CD8-positive, alpha-beta memory T cell (primary cell): ENCODE measurements at regions of chr16 and their contacts with region 1.

Region 1: DNA sequence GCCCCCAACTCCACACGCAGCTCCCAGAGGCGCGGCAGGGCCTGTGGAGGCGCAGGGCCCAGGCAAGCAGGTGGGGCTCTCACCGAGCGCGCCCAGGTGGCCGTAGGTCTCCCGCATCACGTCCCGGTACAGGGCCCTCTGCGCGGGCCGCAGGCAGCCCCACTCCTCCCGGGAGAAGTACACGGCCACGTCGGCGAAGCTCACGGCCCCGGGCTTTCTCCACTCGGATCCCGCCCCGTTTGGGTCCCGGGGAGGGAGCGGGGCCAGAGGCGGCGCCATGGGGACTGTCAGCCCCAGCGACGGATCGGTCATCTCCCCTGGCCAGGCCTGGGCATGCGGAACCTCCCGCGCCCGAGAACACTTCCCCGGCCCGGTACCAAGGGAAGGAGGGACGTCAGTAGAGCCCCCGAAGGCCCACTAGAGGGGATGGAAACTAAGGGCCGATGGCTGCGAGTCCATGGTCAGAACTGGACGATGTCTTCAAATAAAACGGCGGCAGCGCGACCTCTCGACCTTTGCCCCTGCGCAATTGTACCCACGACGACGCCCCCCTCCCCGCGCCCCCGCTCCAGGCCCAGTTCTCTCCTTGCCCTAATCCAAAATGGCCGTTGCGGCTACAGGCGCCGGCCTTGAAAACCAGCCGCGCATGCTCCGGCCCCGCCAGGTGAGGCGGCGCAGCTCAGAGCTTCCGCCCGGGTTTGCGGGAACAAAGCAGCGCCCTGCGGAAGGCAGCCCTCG is at the start of gene ZNF747:
- DNase-seq: peak; percentile 86 to 94 (median 87)
- H3K4me3 ChIP-seq: peak within 1 kb of the TSS; percentile 98
- H3K4me3 Mint-ChIP-seq: peak within 1 kb of the TSS; percentile 89 to 98 (median 92)
- H3K27ac ChIP-seq: peak within 1 kb of the TSS; percentile 91
- H3K27ac Mint-ChIP-seq: peak within 1 kb of the TSS; percentile 92 to 99 (median 98)
- H3K4me1 ChIP-seq: peaks cover 20% of the 10 kb centered on the region
- H3K4me1 Mint-ChIP-seq: peaks cover 18 to 39% (median 25%) of the 10 kb centered on the region in 3 donors
- H3K27me3 ChIP-seq: no peaks in the 10 kb centered on the region
- H3K27me3 Mint-ChIP-seq: no peaks in the 10 kb centered on the region
- total RNA-seq, gene ZNF747: 13.5 to 17.0 TPM

Region 2: DNA sequence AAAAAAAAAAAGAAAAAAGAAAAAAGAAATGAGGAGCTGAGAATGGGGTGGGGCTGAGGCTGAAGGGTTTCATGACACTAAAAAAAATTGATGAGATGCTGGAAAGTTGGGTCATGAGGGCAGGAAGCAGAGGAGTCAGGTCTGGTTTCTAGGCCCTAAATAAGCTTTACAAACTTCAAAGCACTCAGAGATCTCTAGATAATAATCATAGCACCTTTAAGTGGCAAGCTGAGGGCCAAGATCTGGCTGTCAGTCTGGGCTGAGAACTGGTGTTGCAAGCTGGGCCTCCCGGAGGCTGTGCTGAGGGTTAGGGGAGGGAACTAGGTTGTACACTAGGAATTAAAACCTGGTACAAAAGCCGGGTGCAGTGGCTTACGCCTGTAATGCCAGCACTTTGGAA is 17.2 kb after region 1 on chr16:
- CTCF ChIA-PET with region 1: interaction called, 69 read pairs
- POLR2A ChIA-PET with region 1: interaction called, 71 read pairs
- DNase-seq: peak; percentile 59 to 86 (median 71)
- H3K4me3 ChIP-seq: peak overlapping the region; percentile 37
- H3K4me3 Mint-ChIP-seq: peak overlapping the region; percentile 64 to 89 (median 80)
- H3K27ac ChIP-seq: peak overlapping the region; percentile 24
- H3K27ac Mint-ChIP-seq: peak overlapping the region; percentile 82 to 97 (median 94)
- H3K4me1 ChIP-seq: peaks cover 42% of the 10 kb centered on the region
- H3K4me1 Mint-ChIP-seq: peaks cover 50 to 75% (median 58%) of the 10 kb centered on the region in 3 donors
- H3K27me3 ChIP-seq: no peaks in the 10 kb centered on the region
- H3K27me3 Mint-ChIP-seq: peaks cover 0 to 3% of the 10 kb centered on the region in 2 donors

Region 3: GRCh38 chr16:30557957-30558788 is 23.6 kb after region 1 on chr16 and contains the start of gene ZNF764:
- CTCF ChIA-PET with region 1: interaction called, 69 read pairs
- POLR2A ChIA-PET with region 1: interaction called, 71 read pairs
- DNase-seq: peak; percentile 92 to 98 (median 95)
- H3K4me3 ChIP-seq: peak within 1 kb of the TSS; percentile 90
- H3K4me3 Mint-ChIP-seq: peak within 1 kb of the TSS; percentile 85 to 95 (median 89)
- H3K27ac ChIP-seq: peak within 1 kb of the TSS; percentile 93
- H3K27ac Mint-ChIP-seq: peak within 1 kb of the TSS; percentile 87 to 97 (median 92)
- H3K4me1 ChIP-seq: peaks cover 27% of the 10 kb centered on the region
- H3K4me1 Mint-ChIP-seq: peaks cover 38 to 63% (median 40%) of the 10 kb centered on the region in 3 donors
- H3K27me3 ChIP-seq: no peaks in the 10 kb centered on the region
- H3K27me3 Mint-ChIP-seq: peaks cover 0 to 2% of the 10 kb centered on the region in 2 donors
- total RNA-seq, gene ZNF764: 15.1 to 15.7 TPM

Region 4: DNA sequence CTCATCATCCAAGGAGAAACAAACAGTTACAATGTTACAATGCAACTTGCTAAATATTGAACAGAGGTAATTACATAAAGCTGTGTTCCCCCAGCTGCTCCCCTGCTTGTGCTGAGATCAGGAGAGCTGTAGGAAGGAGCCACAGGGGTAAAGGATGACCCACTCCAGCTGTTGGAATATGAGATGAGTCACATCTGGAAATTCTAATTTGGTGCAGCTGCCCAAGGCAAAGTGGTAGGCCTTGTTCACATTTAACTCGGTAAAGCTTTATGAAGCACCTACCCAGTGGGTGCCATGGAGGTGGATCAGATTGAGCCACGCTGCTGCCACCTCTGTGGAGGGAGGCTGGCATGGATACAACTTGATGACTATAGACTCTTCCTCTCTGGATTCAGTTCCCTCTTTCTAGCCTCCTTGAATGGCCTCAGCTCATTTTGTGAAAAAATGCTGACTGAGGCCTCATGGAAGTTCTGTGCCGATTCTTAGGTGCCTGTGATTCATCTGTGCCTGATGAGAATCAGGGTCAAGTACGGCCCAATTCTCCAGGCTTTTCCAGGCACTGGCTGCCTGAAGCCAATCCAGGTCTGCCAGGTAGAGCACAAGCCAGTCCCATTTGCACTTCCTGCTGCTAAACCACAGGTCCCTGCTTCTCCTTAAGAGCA is 68.2 kb after region 1 on chr16:
- CTCF ChIA-PET with region 1: interaction called, 19 read pairs
- POLR2A ChIA-PET with region 1: interaction called, 3 read pairs
- DNase-seq: no peak
- H3K4me3 ChIP-seq: no peak overlapping the region
- H3K4me3 Mint-ChIP-seq: no peak overlapping the region
- H3K27ac ChIP-seq: no peak overlapping the region
- H3K27ac Mint-ChIP-seq: peak overlapping the region in 2 of 8 donors; percentile 23 to 56
- H3K4me1 ChIP-seq: no peaks in the 10 kb centered on the region
- H3K4me1 Mint-ChIP-seq: peaks cover 4% of the 10 kb centered on the region in 3 donors
- H3K27me3 ChIP-seq: no peaks in the 10 kb centered on the region
- H3K27me3 Mint-ChIP-seq: no peaks in the 10 kb centered on the region

Region 5: GRCh38 chr16:30669896-30670797 is 135.6 kb after region 1 on chr16:
- CTCF ChIA-PET with region 1: no interaction called
- POLR2A ChIA-PET with region 1: no interaction called
- DNase-seq: no peak
- H3K4me3 ChIP-seq: no peak overlapping the region
- H3K4me3 Mint-ChIP-seq: no peak overlapping the region
- H3K27ac ChIP-seq: no peak overlapping the region
- H3K27ac Mint-ChIP-seq: peak overlapping the region in 1 of 8 donors; percentile 66
- H3K4me1 ChIP-seq: no peaks in the 10 kb centered on the region
- H3K4me1 Mint-ChIP-seq: peaks cover 4 to 17% (median 4%) of the 10 kb centered on the region in 3 donors
- H3K27me3 ChIP-seq: no peaks in the 10 kb centered on the region
- H3K27me3 Mint-ChIP-seq: no peaks in the 10 kb centered on the region